ENCODE measurements at regions of chr1 and their contacts with region 1.

Region 1: DNA sequence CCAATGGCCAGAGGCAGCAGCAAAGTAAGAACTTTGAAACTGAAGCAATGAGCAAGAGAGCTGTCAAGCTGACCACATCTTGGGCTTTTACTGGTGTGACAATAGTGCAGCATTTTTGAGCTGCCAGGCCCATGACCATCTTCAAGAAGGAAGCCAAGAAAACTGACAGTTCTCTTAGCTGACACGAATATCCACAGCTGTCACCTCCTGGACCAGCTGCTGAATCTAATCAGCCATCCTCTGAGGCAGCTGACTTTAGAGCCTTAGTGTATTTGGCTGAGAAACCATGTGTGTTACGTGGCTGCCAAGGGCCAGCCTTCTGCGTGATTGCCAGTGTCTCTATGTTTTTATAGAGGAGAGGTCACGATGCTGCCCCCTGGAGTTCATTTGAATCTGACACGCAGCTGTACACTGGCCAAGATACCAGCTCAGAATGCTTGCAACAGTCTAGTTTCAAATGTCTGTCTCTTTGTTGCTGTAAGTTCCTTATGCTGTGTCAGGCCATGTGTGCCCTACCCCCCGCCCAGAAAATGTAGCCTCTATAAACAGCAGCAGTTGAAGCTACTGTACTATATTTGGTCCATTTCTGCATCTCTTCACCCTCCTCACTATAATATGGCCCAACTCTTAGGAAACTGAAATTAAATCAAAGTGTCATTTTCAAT is 39.7 kb downstream of the PALMD start:
- DNase-seq: peak; percentile 57
- ATAC-seq: peak; percentile 97
- H3K4me3 ChIP-seq: no peak overlapping the region
- H3K27ac ChIP-seq: no peak overlapping the region
- H3K4me1 ChIP-seq: peaks cover 0 to 14% of the 10 kb centered on the region in 2 experiments; a peak in 3 of 4 replicates
- H3K27me3 ChIP-seq: no peaks in the 10 kb centered on the region
- CTCF ChIP-seq: peak; percentile 18 to 74 (median 70); a peak in 5 of 6 replicates
- POLR2A ChIP-seq: no peak
- RAD21 ChIP-seq: peak; percentile 48

Region 2: DNA sequence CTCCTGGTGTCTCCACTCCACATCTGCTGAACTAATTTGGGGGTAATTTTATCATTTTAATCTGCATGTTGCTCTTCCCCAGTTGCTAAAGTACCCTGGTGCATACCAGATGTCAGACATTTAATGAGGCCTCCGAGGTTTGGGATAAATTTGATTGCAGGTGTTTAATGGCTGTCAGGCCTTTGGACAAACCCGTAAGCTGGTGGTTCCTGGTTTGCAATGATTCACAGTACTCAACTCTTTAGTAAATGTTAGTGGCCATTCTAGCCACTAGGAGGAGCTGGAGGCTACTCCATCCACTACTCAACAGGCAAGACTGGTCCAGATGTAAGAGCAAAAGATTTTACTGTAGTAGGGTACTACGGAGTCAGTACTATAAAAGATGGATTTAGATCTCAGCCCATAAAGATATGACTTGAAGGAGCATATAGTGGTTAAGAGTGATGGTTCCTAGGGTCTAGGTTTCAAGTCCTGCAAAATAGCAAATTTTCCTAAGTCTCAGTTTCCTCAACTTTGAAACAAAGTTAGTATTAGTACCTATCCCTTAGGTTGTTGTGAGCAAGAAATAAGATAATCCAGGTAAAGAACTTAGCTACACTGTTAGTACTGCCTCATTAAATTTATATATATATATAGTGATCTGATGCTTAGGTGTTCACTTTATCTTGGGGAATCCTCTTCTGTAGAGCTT is 891.3 kb before region 1 on chr1:
- CTCF ChIA-PET with region 1: interaction called, 3 read pairs
- POLR2A ChIA-PET with region 1: no interaction called
- RAD21 ChIA-PET with region 1: no interaction called
- intact Hi-C with region 1: loop called (anchors 5 kb)
- DNase-seq: peak; percentile 48
- ATAC-seq: peak; percentile 92
- H3K4me3 ChIP-seq: no peak overlapping the region
- H3K27ac ChIP-seq: no peak overlapping the region
- H3K4me1 ChIP-seq: no peaks in the 10 kb centered on the region
- H3K27me3 ChIP-seq: no peaks in the 10 kb centered on the region
- CTCF ChIP-seq: peak; percentile 46 to 80 (median 69); a peak in 5 of 6 replicates
- POLR2A ChIP-seq: no peak
- RAD21 ChIP-seq: peak; percentile 67

Region 3: DNA sequence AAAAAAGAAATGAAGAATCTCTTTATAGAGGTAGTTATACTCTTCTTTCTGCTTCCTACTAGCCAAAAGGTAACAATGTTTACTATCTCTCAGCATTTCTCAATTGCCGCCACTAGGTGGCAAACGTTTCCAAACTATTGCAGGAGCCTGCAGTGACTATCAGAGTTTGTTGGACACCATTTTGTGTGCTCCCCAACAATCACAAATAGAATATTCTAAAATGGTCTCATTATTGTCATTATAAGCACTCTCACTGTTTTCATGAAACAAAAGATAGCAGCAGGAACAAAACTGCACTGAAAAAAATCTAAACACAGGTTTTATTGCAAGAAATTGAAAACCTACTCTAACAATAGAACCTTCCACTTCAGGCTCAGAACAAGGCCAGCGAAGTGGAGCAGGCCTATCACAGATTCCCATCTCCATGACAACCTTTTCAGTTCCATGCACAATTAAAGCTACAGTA is 505.3 kb before region 1 on chr1:
- CTCF ChIA-PET with region 1: interaction called, 8 read pairs
- POLR2A ChIA-PET with region 1: no interaction called
- RAD21 ChIA-PET with region 1: no interaction called
- intact Hi-C with region 1: loop called (anchors 5 kb)
- DNase-seq: peak; percentile 79
- ATAC-seq: peak; percentile 97
- H3K4me3 ChIP-seq: no peak overlapping the region
- H3K27ac ChIP-seq: peak overlapping the region; percentile 38; the same call in 1 of the 2 replicates
- H3K4me1 ChIP-seq: peaks cover 2 to 3% of the 10 kb centered on the region in 2 experiments; a peak in 3 of 4 replicates
- H3K27me3 ChIP-seq: no peaks in the 10 kb centered on the region
- CTCF ChIP-seq: peak; percentile 71 to 83 (median 82)
- POLR2A ChIP-seq: no peak
- RAD21 ChIP-seq: peak; percentile 90

Region 4: GRCh38 chr1:99737016-99737415 is 51.4 kb after region 1 on chr1:
- CTCF ChIA-PET with region 1: no interaction called
- POLR2A ChIA-PET with region 1: no interaction called
- RAD21 ChIA-PET with region 1: no interaction called
- intact Hi-C with region 1: no loop called
- DNase-seq: peak; percentile 21
- ATAC-seq: peak; percentile 99
- H3K4me3 ChIP-seq: no peak overlapping the region
- H3K27ac ChIP-seq: no peak overlapping the region
- H3K4me1 ChIP-seq: no peaks in the 10 kb centered on the region
- H3K27me3 ChIP-seq: no peaks in the 10 kb centered on the region
- CTCF ChIP-seq: peak in 2 of 3 experiments; percentile 19 to 44; a peak in 3 of 6 replicates
- POLR2A ChIP-seq: no peak
- RAD21 ChIP-seq: peak; percentile 62